Sigmoid colon (tissue), 7 donors: ENCODE measurements at regions of chr16 and their contacts with region 1.

Region 1: DNA sequence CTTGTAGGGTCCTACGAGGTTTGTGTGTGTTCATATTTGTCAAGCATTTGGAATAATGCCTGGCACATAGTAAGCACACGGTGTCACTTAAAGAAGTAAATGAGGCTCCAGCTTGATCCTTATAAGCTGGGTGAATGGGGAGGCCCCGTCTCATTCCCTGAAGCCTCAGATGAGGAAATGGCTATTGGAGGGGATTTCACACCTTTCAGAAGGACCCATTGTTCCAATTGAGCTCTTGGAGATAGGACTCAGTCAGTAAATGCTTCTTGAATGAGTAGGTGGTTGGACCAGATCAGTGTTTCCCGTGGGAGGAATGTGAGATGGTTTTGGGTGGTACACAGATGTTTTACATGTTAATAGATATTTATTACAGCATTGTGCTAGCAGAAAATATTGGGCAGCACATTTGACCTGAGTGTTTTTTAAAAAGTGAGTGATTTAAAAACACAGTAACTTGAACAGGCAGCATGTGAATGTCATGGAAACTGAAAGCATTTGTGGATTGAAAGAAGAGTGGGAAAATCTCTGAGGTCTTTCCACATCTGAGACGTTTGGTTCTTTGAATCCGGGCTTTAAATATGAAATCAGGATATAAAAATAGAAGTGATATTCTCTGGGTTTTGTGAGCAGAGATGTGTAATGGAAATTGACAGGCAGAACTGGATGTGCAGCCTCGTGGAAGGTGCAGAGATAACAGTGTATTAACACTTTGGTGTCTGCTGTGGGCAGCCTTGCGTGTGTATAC is 36.4 kb upstream of the ARHGAP17 start:
- DNase-seq: no peak
- H3K4me3 ChIP-seq: peak overlapping the region in 2 of 4 donors; percentile 7 to 15
- H3K27ac ChIP-seq: peak overlapping the region; percentile 23 to 91 (median 71)
- H3K4me1 ChIP-seq: peaks cover 0 to 31% (median 22%) of the 10 kb centered on the region in 4 donors
- H3K27me3 ChIP-seq: no peaks in the 10 kb centered on the region
- CTCF ChIP-seq: no peak
- EP300 ChIP-seq: no peak
- POLR2A ChIP-seq: no peak

Region 2: GRCh38 chr16:24208710-24209109 is 842.9 kb before region 1 on chr16:
- intact Hi-C with region 1: no loop called
- DNase-seq: no peak
- H3K4me3 ChIP-seq: no peak overlapping the region
- H3K27ac ChIP-seq: peak overlapping the region in 3 of 4 donors; percentile 3 to 65 (median 62)
- H3K4me1 ChIP-seq: peaks cover 0 to 15% (median 9%) of the 10 kb centered on the region in 4 donors
- H3K27me3 ChIP-seq: no peaks in the 10 kb centered on the region
- CTCF ChIP-seq: no peak
- EP300 ChIP-seq: no peak
- POLR2A ChIP-seq: no peak

Region 3: DNA sequence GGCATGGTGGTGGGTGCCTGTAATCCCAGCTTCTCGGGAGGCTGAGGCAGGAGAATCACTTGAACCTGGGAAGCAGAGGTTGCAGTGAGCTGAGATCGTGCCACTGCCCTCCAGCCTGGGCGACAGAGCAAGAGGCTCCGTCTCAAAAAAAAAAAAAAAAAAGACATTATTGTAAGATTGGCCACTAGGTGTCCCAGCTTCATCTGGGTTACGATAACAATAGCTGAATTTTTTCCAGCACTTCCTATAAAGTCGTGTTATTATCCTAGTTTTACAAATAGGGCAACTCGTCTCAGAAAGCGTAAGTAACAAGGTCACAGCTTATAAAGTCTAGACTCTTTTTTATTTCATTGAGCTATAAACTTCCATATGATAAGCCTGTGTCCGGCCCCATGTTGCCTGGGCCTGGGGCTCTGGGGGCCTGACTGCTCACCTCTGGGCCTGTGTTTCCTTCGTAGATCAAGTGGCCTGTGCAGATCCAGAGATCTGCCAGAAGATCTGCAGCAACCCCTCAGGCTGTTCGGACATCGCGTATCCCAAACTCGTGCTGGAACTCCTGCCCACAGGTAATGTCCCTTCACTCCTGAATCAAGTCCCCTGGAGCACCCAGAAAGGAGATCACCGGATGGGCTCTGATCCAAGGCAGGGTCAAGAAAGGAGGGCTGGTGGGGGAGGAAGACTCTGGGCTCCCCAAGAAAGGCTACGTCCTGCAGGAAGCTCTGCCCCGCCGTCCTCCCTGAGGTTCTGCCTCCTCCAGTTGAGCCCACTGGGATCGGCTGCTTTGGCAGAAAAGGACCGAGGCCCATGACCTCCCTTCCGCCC is 145.2 kb before region 1 on chr16:
- intact Hi-C with region 1: no loop called
- DNase-seq: peak; percentile 56
- H3K4me3 ChIP-seq: no peak overlapping the region
- H3K27ac ChIP-seq: no peak overlapping the region
- H3K4me1 ChIP-seq: no peaks in the 10 kb centered on the region
- H3K27me3 ChIP-seq: no peaks in the 10 kb centered on the region
- CTCF ChIP-seq: peak in 2 of 4 experiments; percentile 17 to 39
- EP300 ChIP-seq: no peak
- POLR2A ChIP-seq: no peak

Region 4: DNA sequence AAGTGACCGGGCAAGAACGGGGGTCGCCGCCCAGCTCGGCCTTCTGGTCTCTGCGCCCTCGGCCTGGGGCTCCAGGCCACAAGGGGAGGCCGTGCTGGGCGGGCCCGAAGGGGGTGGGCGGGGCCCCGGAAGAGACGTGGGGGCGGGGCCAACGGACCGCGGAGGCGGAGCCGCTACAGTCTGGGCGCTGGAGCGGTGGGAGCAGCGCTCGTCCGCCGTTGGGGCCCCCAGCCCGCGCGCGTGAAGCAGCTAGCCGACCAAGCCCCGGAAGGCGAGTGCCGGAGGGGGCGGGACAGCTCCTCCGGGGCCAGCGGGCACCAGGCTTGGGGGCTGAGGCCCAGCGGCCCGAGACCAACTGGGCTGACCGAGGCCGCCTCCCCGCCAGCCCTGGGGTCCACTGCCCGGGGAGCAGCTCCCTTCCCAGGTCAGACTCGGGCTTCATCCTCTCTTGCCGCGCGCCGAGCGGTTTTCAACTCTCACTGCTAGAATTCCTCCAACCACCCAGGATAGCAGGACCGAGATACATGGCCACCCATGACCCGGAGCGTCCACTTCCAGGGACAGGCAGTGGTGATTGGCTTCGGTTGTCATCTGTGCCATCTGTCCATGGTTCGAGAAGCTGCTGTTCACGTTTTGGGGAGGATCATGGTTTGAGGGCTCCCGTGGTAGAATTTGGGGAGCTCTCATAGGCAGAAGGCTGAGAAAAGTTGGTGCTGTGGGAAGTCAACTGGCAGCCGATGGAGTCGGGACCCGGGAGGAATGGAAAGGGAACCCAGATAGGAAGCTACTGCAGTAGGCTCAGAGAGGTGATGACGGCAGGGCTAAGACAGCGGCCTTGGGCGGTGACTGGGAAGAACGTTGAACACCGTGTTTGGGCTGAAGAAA is 15.4 kb after region 1 on chr16:
- intact Hi-C with region 1: loop called (anchors 2 kb)
- DNase-seq: peak; percentile 90
- H3K4me3 ChIP-seq: peak overlapping the region; percentile 71 to 87 (median 82)
- H3K27ac ChIP-seq: peak overlapping the region; percentile 94 to 96 (median 94)
- H3K4me1 ChIP-seq: peaks cover 0 to 16% (median 13%) of the 10 kb centered on the region in 4 donors
- H3K27me3 ChIP-seq: no peaks in the 10 kb centered on the region
- CTCF ChIP-seq: no peak
- EP300 ChIP-seq: no peak
- POLR2A ChIP-seq: peak; percentile 51 to 69

Region 5: DNA sequence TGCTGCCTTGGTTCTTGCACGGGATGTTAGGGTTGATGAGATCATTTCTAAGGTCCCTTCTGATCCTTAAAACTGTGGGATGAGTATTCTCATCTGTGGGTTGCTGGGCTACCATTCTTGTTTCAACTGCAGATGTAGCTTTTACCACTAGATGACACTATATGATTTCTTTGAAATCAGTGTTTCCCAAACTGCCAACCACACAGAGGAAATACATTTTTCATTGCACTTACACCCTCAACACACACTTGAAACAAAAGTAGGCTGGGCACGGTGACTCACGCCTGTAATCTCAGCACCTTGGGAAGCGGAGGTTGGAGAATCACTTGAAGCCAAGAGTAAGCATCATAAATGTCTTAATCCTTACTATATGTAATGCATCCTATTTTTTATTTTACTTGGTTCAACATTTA is 75.2 kb after region 1 on chr16:
- intact Hi-C with region 1: loop called (anchors 1 kb)
- DNase-seq: no peak
- H3K4me3 ChIP-seq: no peak overlapping the region
- H3K27ac ChIP-seq: peak overlapping the region in 1 of 4 donors; percentile 10
- H3K4me1 ChIP-seq: peaks cover 0 to 11% (median 7%) of the 10 kb centered on the region in 4 donors
- H3K27me3 ChIP-seq: no peaks in the 10 kb centered on the region
- CTCF ChIP-seq: peak in 3 of 4 experiments; percentile 41 to 56 (median 52)
- EP300 ChIP-seq: no peak
- POLR2A ChIP-seq: no peak

Region 6: GRCh38 chr16:25224731-25225319 is 173.2 kb after region 1 on chr16:
- intact Hi-C with region 1: loop called (anchors 2 kb)
- DNase-seq: no peak
- H3K4me3 ChIP-seq: no peak overlapping the region
- H3K27ac ChIP-seq: no peak overlapping the region
- H3K4me1 ChIP-seq: peaks cover 0 to 4% (median 2%) of the 10 kb centered on the region in 4 donors
- H3K27me3 ChIP-seq: no peaks in the 10 kb centered on the region
- CTCF ChIP-seq: no peak
- EP300 ChIP-seq: no peak
- POLR2A ChIP-seq: no peak